SK-N-SH (cell line): ENCODE measurements at regions of chr17 and their contacts with region 1.

Region 1: DNA sequence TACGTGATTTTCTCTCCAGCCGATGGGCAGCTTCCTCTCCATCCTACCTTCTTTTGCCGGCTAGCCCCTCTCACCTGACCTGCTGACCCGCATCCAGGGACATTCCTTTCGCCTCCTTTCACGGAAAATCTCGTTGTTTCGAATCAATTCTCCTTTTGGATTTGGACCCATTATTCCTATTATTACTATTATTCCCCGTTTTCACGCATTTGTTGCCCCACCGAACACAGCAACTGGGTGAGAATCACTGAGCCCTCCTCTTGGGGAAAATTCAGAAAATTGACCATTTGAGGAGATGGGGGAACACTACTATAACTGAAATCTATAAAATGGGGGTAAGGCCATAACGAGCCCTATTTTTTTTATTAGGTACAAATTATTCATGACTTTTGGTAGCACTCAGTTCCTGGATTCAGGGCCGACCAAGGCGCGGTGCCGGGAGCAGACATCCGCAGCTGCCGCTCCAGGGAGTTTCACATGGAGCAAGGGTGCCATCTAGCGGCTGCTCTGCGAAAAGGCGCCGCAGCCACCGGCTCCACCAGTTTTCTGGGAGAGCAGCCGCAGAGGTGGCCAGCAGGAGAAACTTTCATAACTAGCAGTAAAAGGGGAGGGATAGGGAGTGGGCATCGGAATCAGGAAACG is 3.3 kb upstream of the HOXB8 start:
- DNase-seq: peak; percentile 98
- H3K4me3 ChIP-seq: no peak overlapping the region
- H3K27ac ChIP-seq: no peak overlapping the region
- H3K4me1 ChIP-seq: no peaks in the 10 kb centered on the region
- H3K27me3 ChIP-seq: peaks cover 100% of the 10 kb centered on the region
- CTCF ChIP-seq: peak; percentile 100
- EP300 ChIP-seq: no peak
- RAD21 ChIP-seq: peak; percentile 97

Region 2: DNA sequence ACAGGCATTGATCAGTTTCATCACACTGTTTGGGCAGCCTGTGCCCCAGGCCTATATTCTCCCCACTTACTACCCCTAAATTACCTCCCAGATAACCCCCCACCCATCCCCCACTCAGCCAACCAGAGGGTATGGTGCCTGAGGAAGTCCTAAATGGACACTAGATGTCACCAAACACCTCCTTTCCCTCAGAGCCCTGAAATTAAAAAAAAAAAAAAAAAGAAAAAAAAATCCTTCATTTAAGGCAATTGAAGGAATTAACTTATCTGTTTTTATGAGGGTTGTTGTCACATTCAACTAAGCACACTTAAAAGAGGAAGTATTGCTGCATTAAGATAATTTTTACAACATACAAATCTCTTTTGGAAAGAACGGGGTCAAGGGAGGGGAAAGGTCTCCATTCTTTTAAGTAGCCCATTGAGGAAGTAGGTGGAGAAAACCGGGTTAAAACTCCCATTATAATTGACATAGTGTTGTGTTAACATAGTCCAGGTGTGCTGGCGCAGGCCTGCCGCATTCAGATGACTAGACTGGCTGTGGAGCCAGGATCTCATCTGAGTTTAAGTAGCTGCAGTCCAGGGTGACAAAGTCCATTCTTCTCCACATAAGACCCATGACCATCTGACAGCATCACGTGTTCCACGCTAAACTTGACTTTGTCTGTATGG is 464.6 kb before region 1 on chr17:
- CTCF ChIA-PET with region 1: interaction called, 11 read pairs
- POLR2A ChIA-PET with region 1: no interaction called
- DNase-seq: peak; percentile 62
- H3K4me3 ChIP-seq: no peak overlapping the region
- H3K27ac ChIP-seq: no peak overlapping the region
- H3K4me1 ChIP-seq: peaks cover 4 to 6% of the 10 kb centered on the region in 2 experiments; a peak in 3 of 4 replicates
- H3K27me3 ChIP-seq: peaks cover 84% of the 10 kb centered on the region
- CTCF ChIP-seq: peak; percentile 74
- EP300 ChIP-seq: no peak
- RAD21 ChIP-seq: peak; percentile 72

Region 3: DNA sequence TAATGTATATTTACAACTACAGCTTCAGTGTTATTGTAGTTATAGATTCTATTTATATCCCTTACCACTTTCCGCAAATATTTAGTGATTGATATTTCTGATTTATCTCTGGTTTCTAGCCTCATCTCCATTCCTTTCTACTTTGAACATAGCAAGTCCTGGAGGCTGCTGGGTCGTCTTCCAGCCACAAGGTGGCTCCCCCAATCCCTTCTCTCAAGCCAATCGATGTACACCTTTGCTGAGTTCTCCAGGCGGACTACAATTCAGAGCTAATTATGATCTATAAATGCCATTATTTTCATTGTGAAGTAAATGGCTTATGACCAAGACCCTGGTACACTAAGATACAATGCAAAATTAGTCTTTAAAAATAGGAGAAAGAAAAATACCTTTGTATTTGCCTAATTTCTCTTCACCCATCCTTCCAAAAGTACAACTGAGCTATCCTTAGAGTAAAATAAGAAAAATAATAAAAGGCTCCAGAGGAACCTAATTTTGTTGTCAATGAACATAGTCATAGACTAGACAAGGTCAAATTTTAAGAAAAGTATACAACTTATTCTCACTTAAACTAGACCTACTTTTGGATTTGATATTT is 310.5 kb before region 1 on chr17:
- CTCF ChIA-PET with region 1: interaction called, 59 read pairs
- POLR2A ChIA-PET with region 1: no interaction called
- DNase-seq: peak; percentile 48
- H3K4me3 ChIP-seq: no peak overlapping the region; a peak in 1 of 4 replicates
- H3K27ac ChIP-seq: no peak overlapping the region
- H3K4me1 ChIP-seq: no peaks in the 10 kb centered on the region; a peak in 1 of 4 replicates
- H3K27me3 ChIP-seq: peaks cover 52% of the 10 kb centered on the region
- CTCF ChIP-seq: peak; percentile 97
- EP300 ChIP-seq: no peak
- RAD21 ChIP-seq: peak; percentile 67

Region 4: DNA sequence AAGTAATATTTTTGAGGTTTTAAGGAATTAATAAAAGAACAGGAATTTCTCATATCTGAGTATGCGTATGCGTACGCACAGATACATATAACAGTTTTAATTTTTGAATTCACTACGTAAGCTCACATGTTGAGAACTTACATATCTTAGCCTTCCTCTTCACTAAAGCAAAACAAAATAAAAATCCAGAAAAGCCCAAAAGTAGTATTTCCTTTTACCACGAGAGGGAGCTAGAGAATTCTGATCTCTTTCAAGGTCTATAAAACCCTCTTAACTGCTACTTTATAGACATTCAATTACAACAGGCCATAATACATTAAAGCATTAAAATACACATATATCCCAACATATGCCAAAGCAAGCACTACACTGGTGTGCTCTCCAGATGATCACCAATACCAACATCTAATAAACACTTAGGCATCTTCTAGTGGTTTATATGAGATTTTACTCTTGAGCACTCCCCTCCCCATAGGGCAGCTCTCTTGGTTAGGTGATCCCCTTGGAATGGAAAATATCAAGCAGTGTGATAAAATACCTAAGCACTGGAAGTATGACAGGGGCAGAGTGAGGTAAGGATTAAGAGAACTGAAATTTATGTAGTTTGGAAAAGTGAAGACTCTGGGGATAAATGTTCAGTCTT is 282.4 kb before region 1 on chr17:
- CTCF ChIA-PET with region 1: interaction called, 44 read pairs
- POLR2A ChIA-PET with region 1: no interaction called
- DNase-seq: peak; percentile 34
- H3K4me3 ChIP-seq: no peak overlapping the region
- H3K27ac ChIP-seq: no peak overlapping the region
- H3K4me1 ChIP-seq: no peaks in the 10 kb centered on the region
- H3K27me3 ChIP-seq: peaks cover 52% of the 10 kb centered on the region
- CTCF ChIP-seq: peak; percentile 95
- EP300 ChIP-seq: no peak
- RAD21 ChIP-seq: peak; percentile 73

Region 5: DNA sequence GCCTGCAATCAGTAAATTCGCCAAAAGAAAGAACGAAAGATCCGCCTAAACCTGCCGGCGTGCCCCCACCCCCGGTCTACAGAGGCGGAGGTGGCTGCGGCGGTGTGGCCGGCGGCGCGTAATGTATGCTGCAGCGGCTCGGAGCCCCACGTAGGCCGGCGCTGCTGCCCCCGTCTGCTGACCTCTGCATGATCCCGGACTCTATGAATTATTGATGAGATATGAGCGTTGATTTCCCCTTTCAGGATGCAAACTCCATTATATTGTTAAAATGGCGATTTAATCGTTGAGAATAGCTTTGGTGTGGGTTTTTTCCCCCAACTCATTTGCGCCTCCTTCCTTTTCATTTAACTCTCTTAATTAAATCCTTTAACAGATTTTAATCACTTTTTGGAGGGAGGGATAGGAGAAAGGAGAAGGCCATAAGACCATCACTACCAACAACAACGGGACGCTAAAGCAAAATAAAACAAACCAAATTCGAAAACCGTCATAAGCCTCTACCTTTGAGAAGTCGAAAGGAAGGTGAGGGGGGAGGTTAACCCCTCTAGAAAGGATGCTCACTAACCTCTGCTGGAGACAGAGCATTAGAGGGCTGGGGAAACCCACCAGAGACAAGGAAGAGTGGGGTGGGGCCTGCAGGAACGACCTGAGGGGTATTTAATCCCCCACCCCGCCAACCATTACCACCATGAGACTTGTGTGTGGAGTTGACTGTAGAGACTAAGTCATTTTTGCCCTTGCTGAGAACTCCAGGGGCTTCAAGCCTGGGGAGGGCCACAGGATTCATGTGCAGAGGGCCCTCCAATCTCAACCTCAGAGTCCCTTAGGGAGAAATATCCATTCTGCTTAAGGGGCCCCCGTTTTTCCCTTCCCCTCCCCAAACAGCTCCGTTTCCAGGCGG is 31.8 kb before region 1 on chr17:
- CTCF ChIA-PET with region 1: interaction called, 20 read pairs
- POLR2A ChIA-PET with region 1: no interaction called
- DNase-seq: no peak
- H3K4me3 ChIP-seq: no peak overlapping the region
- H3K27ac ChIP-seq: no peak overlapping the region
- H3K4me1 ChIP-seq: peaks cover 2 to 3% of the 10 kb centered on the region in 2 experiments; a peak in 1 of 4 replicates
- H3K27me3 ChIP-seq: peaks cover 100% of the 10 kb centered on the region
- CTCF ChIP-seq: no peak
- EP300 ChIP-seq: no peak
- RAD21 ChIP-seq: no peak

Region 6: DNA sequence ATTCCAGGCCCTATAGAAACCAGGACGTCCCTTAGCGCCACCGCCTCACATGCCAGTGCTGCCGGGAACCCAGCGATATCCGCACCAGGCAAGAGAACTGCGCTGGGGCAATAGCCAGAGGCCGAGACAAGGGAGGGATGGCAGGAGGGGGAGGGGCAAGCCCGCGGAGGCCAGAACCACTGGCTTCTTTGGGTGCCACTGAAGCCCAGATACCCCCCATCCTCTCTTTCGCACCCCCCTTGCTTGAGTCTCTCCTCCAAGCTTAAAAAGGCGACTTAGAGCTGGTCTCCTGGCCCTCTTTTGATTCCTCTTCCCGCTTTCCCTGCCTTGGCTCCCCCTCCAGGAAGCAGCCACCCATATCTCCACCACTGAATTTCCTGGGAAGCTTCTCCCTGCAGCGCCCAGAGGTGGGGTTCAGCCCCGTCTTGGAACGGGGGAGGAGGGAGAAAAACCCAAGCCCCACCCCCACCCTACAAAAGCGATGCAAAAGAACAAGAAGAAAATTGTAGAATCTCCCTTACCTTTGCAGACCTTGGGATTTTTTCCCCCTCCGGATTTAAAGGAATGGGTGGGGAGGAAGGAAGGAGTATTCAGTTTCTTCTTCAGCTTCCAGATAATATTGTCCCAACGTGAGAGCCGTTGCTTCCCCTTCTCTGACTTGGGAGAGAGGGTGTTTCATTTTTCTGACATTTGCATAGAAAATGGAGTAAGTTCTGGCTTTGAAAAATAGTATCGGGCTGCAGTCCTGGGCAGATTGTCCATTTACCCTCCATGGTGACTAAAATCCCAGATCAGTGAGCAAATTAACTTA is 14.2 kb before region 1 on chr17:
- CTCF ChIA-PET with region 1: no interaction called
- POLR2A ChIA-PET with region 1: no interaction called
- DNase-seq: no peak
- H3K4me3 ChIP-seq: no peak overlapping the region
- H3K27ac ChIP-seq: no peak overlapping the region
- H3K4me1 ChIP-seq: no peaks in the 10 kb centered on the region; a peak in 1 of 4 replicates
- H3K27me3 ChIP-seq: peaks cover 100% of the 10 kb centered on the region
- CTCF ChIP-seq: no peak
- EP300 ChIP-seq: no peak
- RAD21 ChIP-seq: no peak

Region 7: DNA sequence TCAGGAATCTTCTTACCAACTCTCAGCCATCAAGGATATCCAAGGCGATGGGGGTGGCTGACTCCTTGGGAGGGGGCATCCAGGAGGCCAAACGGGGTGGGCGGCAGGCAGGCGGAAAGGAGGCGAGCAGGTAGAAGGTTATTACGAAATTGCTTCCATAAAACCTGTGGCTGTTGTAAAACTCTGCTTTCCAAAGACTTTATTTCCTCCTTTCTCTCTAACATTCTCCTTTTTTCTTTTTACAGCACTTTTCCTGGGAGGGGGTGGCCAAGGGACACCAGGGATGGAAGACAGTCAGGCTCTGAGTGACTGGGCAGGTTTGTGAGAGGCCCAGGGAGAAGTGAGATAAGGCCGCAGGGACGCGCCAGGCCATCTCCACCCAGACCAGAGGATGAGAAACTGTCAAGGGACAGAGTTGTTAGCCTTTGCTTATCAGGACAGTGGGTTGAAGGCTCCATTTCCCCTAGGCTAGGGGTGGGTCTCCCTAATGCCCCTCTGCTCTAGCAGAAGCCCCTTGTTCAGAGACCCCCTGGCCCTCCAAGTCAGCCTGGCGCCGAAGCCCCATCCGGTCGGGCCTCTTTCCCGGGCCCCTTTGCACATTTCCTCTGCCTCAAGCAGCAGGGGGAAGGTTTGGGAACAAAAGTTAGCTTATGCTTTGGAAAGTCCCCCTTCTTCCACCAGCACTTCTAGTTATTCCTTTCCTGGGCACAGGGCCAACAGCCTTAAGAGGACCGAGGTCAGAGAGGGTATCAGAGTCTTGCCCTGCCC is 12.7 kb after region 1 on chr17:
- CTCF ChIA-PET with region 1: interaction called, 50 read pairs
- POLR2A ChIA-PET with region 1: no interaction called
- DNase-seq: no peak
- H3K4me3 ChIP-seq: no peak overlapping the region
- H3K27ac ChIP-seq: no peak overlapping the region
- H3K4me1 ChIP-seq: no peaks in the 10 kb centered on the region
- H3K27me3 ChIP-seq: peaks cover 98% of the 10 kb centered on the region
- CTCF ChIP-seq: no peak
- EP300 ChIP-seq: no peak
- RAD21 ChIP-seq: no peak

Region 8: GRCh38 chr17:48773245-48773644 is 154.9 kb after region 1 on chr17:
- CTCF ChIA-PET with region 1: no interaction called
- POLR2A ChIA-PET with region 1: no interaction called
- DNase-seq: no peak
- H3K4me3 ChIP-seq: no peak overlapping the region
- H3K27ac ChIP-seq: no peak overlapping the region
- H3K4me1 ChIP-seq: no peaks in the 10 kb centered on the region
- H3K27me3 ChIP-seq: peaks cover 69% of the 10 kb centered on the region
- CTCF ChIP-seq: no peak
- EP300 ChIP-seq: no peak
- RAD21 ChIP-seq: no peak